GM10248 (cell line): ENCODE measurements at regions of chr3 and their contacts with region 1.

Region 1: GRCh38 chr3:197700095-197700494 is 36.6 kb downstream of the RUBCN start:
- DNase-seq: no peak
- CTCF ChIP-seq: no peak

Region 2: GRCh38 chr3:197224034-197224444 is 476.1 kb before region 1 on chr3:
- CTCF ChIA-PET with region 1: no interaction called
- POLR2A ChIA-PET with region 1: no interaction called
- DNase-seq: peak; percentile 57
- CTCF ChIP-seq: peak; percentile 64

Region 3: DNA sequence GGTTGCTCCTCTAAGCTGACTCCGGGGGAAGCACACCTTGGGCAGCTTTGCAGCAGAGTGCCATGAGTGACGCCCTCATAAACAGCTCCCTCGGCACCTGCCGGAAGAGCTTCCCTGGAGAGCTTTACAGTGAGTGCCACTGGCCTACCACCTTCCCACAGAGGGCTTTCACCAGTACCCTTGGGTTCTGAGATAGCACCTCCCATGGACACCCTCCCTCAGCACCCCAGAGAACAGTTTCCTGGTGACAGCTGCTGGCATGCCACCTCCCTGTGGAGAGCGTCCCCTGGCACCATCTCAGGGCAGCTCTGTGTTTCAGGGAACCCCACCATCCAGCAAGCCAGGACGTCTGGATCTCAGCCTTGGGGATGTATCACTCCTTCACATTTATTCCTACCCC is 12.5 kb before region 1 on chr3:
- CTCF ChIA-PET with region 1: interaction called, 21 read pairs
- POLR2A ChIA-PET with region 1: no interaction called
- DNase-seq: no peak
- CTCF ChIP-seq: no peak